Heart right ventricle (tissue), 16 donors: ENCODE measurements at regions of chr13 and their contacts with region 1.

Region 1: DNA sequence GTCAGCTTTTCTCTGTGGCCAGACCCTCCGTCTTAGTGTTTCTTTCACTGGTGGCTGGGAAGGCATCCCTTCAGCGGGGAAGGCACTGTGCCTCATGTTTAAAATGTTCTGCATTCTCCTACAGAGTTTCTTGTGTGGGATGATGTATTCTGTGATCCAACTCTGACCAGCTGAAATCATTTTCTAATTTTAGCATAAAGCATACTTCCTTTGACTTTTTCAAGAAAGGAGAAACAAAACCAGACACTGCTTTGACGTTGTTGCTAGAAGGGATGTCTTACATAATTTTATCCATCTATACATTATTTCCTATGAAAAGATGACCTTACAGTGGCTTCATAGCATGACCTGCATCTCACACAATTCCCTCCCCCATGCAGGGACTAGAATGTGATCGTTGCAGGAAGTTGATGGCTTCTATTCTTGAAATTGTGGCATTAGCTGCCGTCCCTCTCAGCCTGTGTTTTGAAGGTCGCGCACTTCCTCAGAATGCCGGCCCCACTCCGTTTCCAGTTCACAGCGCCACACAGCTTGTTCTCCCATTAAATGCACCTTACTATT is 38.6 kb upstream of the TEX29 start:
- DNase-seq: peak in 1 of 2 donors; percentile 47
- ATAC-seq: peak in 7 of 8 donors; percentile 13 to 74 (median 63)
- H3K4me3 ChIP-seq: no peak overlapping the region
- H3K27ac ChIP-seq: peak overlapping the region; percentile 63 to 94 (median 77)
- H3K4me1 ChIP-seq: peaks cover 15 to 65% (median 51%) of the 10 kb centered on the region in 9 donors
- H3K27me3 ChIP-seq: no peaks in the 10 kb centered on the region
- CTCF ChIP-seq: peak in 2 of 9 donors; percentile 21 to 31

Region 2: DNA sequence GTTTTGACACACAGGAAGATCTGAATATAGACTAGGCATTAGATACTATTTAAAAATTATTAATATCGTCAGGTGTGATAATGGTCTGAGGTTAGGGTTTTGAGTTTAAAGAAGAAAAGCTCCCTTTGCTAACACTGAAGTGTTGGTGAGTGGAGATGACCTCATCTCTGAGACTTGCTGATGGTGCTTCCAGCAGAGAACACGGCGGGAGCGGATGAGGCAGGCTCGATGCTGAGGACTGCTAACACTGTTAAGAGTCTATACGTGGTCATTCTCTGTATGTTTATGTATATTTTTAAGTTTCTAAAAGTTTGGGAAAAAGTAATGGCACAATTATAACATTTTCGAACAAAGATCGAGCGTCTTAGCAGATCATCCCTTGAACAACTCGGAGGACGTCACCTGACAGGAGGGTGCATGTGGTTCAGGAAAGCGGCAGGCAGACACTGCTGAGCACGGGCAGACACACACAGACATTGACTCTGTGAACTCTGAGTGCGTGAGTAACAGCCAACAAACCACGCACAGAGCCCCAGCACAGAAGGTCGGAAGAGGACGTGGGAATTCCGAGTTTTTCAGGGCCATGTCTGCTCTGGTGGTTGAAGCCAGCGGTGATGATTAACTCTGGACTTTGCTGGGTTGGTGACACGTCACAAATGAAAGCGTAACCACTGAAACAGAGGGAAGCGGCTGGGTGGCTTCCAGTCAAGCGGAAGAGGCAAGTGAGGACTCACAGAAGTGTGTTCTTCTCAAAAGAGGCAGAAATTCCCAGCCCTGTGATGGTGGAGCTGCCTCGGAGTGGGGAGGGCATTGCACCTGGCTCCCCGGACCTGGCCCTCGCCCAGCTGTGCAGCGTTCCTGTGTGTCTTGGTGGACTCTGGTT is 53.3 kb before region 1 on chr13:
- intact Hi-C with region 1: loop called in 1 of 10 experiments (anchors 10 kb)
- DNase-seq: no peak
- ATAC-seq: peak in 1 of 8 donors; percentile 19
- H3K4me3 ChIP-seq: no peak overlapping the region
- H3K27ac ChIP-seq: no peak overlapping the region
- H3K4me1 ChIP-seq: peaks cover 0 to 93% (median 47%) of the 10 kb centered on the region in 9 donors
- H3K27me3 ChIP-seq: no peaks in the 10 kb centered on the region
- CTCF ChIP-seq: no peak

Region 3: GRCh38 chr13:111241006-111241755 is 40.6 kb before region 1 on chr13:
- intact Hi-C with region 1: loop called in 2 of 10 experiments (anchors 2 to 5 kb)
- DNase-seq: no peak
- ATAC-seq: peak in 3 of 8 donors; percentile 10 to 55 (median 25)
- H3K4me3 ChIP-seq: no peak overlapping the region
- H3K27ac ChIP-seq: no peak overlapping the region
- H3K4me1 ChIP-seq: peaks cover 0 to 25% (median 7%) of the 10 kb centered on the region in 9 donors
- H3K27me3 ChIP-seq: no peaks in the 10 kb centered on the region
- CTCF ChIP-seq: no peak

Region 4: DNA sequence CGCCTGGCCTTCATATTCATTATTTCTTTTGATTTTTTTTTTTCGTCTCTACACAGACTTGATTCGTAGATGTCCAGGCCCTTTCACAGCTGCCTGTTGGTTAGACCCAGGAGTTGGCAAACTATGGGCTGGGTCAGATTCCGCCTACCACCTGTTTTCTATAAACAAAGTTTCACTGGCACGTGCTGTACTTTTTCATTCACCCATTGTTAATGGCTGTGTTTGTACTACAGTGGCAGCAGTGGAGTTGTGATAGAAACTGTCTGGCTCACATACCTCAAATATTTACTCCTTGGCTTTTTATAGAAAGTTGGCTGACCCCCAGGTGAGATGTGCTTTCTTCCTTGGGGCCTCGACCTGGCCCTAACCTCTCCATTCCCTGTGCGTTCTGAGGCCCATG is 34.3 kb before region 1 on chr13:
- intact Hi-C with region 1: loop called in 2 of 10 experiments (anchors 2 to 5 kb)
- DNase-seq: peak in 1 of 2 donors; percentile 30
- ATAC-seq: peak; percentile 32 to 87 (median 72)
- H3K4me3 ChIP-seq: no peak overlapping the region
- H3K27ac ChIP-seq: peak overlapping the region in 8 of 10 donors; percentile 8 to 71 (median 39)
- H3K4me1 ChIP-seq: peaks cover 0 to 57% (median 42%) of the 10 kb centered on the region in 9 donors
- H3K27me3 ChIP-seq: no peaks in the 10 kb centered on the region
- CTCF ChIP-seq: no peak